ENCODE measurements at regions of chr17 and their contacts with region 1.

Region 1: DNA sequence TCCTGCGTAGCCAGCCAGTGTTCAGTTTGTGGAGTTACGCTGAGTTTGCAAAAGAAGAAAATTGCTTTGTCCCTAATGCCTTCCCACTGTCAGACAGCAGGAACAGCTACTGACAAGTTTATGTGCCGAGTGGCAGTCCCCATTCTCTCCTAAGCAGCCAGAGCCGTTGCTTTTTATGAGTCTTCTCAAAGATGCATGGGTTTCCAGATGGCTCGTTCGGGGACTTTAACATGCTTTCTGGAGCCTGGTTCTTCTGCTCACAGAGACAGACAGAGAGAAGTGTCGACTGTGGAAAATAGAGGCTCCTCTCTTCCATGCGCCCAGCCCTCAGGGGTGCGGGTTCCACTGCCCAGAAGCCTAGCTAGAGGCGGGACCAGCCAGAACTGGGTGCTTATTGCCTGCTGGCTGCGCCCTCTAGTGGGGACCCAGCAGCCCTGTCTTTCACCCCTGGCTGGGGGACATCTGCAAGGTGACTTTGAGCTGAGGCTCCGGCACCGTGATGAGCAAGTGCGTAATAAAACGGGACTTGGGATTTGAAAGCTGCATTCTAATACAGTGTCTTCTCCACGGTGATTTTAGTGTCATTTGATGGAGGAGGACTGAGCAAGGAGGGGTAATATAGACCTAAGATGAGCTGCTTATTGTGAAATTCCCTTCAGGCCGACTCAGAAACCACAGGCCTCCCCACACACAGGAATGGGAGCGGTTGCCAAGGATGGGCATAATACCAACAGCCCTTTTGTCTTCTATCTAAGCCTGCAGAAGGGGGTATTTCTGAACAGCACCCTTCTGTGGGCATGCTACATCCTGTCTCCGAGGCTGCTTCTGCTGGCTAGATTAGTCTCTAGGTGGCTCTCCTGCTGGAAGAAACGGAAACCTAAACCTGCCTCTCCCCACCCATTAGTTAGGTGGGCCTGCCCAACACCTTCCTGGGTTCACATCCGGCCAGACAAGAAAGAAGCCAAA is 73.1 kb downstream of the CCDC182 start:
- DNase-seq: peak; percentile 78
- ATAC-seq: peak; percentile 93
- H3K4me3 Mint-ChIP-seq: peak overlapping the region; percentile 73
- H3K27ac Mint-ChIP-seq: peak overlapping the region; percentile 96
- H3K4me1 Mint-ChIP-seq: peaks cover 39% of the 10 kb centered on the region
- H3K27me3 Mint-ChIP-seq: no peaks in the 10 kb centered on the region

Region 2: GRCh38 chr17:57597531-57598453 is 74.2 kb before region 1 on chr17:
- POLR2A ChIA-PET with region 1: interaction called, 55 read pairs
- DNase-seq: no peak
- ATAC-seq: no peak
- H3K4me3 Mint-ChIP-seq: no peak overlapping the region
- H3K27ac Mint-ChIP-seq: peak overlapping the region; percentile 100
- H3K4me1 Mint-ChIP-seq: peaks cover 56% of the 10 kb centered on the region
- H3K27me3 Mint-ChIP-seq: no peaks in the 10 kb centered on the region

Region 3: GRCh38 chr17:57697891-57698711 is 26.2 kb after region 1 on chr17:
- POLR2A ChIA-PET with region 1: no interaction called
- DNase-seq: no peak
- ATAC-seq: no peak
- H3K4me3 Mint-ChIP-seq: no peak overlapping the region
- H3K27ac Mint-ChIP-seq: no peak overlapping the region
- H3K4me1 Mint-ChIP-seq: peaks cover 10% of the 10 kb centered on the region
- H3K27me3 Mint-ChIP-seq: no peaks in the 10 kb centered on the region

Measured in activated naive CD8-positive, alpha-beta T cell treated with anti-CD3 and anti-CD28 coated beads, Interleukin-2, amount 10 ng/mL, durations not matched to agents 7 days and 5 days (primary cell).